A549 (cell line): ENCODE measurements at regions of chr1 and their contacts with region 1.

Region 1: DNA sequence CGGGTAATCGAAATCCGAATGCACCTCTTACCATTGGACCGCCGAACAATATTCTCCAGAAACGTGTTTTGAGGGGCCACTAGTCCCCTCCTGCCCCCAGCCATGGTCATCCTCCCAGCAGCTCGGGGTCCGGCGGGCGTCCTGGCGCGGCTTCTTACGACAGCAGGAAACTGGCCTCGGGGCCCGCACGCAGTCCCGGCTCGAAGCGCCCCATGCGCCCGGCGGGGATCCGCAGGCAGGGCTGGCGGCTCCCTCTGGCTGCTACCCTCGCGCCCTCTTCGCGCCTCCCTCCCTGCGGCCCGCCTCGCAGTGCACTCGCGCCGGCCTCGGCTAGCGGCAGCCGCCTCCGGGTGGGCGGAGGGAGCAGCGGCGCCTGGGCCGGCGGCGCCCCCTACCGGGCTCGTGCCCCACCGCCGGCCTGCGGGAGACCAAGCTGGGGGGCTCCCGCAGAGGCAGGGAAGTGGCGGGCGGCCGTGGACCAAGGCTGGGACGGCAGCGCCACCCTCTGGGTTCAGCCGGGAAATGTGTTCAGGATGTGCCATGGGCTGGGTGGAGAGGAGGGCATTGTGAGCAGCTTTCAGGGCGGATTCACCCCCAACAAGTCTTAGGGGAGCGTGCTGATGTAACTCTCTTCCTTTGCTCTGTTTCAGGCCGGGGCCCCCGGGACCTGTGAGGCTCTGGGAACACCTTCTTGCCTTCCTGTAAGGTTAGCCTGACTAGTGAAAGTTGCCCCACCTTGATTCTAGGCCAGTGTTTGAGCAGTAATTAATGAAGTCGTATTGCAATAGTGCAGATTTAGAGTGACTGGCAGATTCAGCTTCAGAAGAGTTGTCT is at the start of gene KCNH1:
- DNase-seq: peak; percentile 78 to 86
- ATAC-seq: peak; percentile 95
- H3K4me3 ChIP-seq: peak within 1 kb of the TSS; percentile 67
- H3K27ac ChIP-seq: peak within 1 kb of the TSS; percentile 89 to 93
- H3K4me1 ChIP-seq: peaks cover 20% of the 10 kb centered on the region
- CTCF ChIP-seq: peak; percentile 100
- EP300 ChIP-seq: peak in 1 of 2 experiments; percentile 32; a peak in 1 of 5 replicates
- POLR2A ChIP-seq: no peak
- RAD21 ChIP-seq: peak; percentile 96 to 100
- polyA plus RNA-seq, gene KCNH1: 7.9 and 8.4 TPM in 2 replicates

Region 2: GRCh38 chr1:210384630-210385029 is 749.4 kb before region 1 on chr1:
- CTCF ChIA-PET with region 1: interaction called, 21 read pairs
- POLR2A ChIA-PET with region 1: no interaction called
- DNase-seq: no peak
- ATAC-seq: no peak
- H3K4me3 ChIP-seq: no peak overlapping the region
- H3K27ac ChIP-seq: 0 out of 6 replicates have a peak overlapping the region, but pooled peaks of 1 of the 2 experiments have one; percentile 5
- H3K4me1 ChIP-seq: peaks cover 13% of the 10 kb centered on the region; the same call in 2 of the 3 replicates
- CTCF ChIP-seq: no peak
- EP300 ChIP-seq: no peak
- POLR2A ChIP-seq: no peak
- RAD21 ChIP-seq: no peak

Region 3: DNA sequence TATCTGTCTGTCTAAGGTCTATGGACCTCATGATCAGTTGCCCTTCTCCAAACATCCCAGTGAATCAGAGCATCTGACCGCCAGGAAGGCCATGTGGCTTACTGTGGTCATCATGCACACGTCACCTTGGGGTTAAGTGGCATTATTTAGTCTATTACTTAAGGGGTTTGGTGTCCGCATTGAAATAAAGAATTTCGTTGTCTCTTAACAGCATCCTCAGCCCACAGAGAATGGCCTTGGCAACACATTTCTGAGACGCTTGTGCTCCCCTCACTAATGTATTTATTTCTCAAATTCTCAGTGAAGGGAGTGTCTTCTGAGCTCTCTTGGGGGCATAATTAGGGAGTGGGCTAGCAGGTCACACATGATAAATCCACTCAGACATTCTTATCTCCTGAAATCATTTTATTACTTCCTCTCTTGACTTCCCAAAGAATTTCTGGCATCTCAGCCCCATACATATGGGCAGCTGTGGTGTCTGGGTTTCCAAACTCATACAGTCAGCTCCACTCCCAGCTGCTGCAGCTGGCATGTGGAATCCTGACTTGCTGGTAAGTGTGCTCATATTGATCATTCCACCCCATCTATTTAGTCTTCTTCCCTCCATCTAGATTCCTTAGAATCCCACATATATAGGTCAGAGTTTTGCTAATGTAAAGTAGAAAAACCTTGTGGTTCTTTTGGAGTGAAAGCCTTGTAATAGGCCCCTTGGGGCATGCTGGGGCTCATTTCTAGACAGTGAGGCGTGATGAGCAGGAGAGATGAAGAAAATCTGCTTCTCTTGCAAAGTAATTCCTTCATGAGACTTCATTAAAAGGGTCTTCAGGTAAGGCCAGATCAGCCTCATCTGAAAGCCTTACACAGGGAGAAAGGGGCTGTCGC is 694.9 kb before region 1 on chr1:
- CTCF ChIA-PET with region 1: interaction called, 43 read pairs
- POLR2A ChIA-PET with region 1: no interaction called
- DNase-seq: peak in 1 of 2 experiments; percentile 82
- ATAC-seq: peak; percentile 93 to 95
- H3K4me3 ChIP-seq: no peak overlapping the region
- H3K27ac ChIP-seq: peak overlapping the region; percentile 72 to 85
- H3K4me1 ChIP-seq: peaks cover 36% of the 10 kb centered on the region
- CTCF ChIP-seq: no peak
- EP300 ChIP-seq: peak; percentile 84 to 95; a peak in 3 of 5 replicates
- POLR2A ChIP-seq: no peak
- RAD21 ChIP-seq: peak in 1 of 2 experiments; percentile 16; a peak in 2 of 5 replicates

Region 4: DNA sequence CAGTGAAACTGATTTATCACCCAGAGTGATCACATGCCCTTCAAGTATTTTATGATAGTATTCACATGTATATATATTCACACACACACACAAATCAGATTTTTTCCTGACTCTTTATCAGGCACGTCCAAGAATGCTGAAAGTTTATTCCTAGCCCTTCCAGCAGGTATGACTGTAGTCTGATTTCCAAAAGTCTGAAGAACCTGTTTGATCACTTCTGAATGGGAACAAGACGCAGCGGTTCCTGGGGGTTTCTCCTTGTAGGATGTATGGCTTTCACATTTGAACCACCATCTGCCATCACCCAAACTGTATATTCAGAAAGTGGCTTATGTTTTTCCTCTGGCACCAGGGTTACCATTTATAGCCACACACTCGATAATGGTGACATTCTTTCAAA is 671.6 kb before region 1 on chr1:
- CTCF ChIA-PET with region 1: interaction called, 17 read pairs
- POLR2A ChIA-PET with region 1: no interaction called
- DNase-seq: no peak
- ATAC-seq: no peak
- H3K4me3 ChIP-seq: no peak overlapping the region
- H3K27ac ChIP-seq: no peak overlapping the region
- H3K4me1 ChIP-seq: no peaks in the 10 kb centered on the region
- CTCF ChIP-seq: no peak
- EP300 ChIP-seq: no peak
- POLR2A ChIP-seq: no peak
- RAD21 ChIP-seq: no peak

Region 5: GRCh38 chr1:210597555-210598134 is 536.4 kb before region 1 on chr1:
- CTCF ChIA-PET with region 1: interaction called, 279 read pairs
- POLR2A ChIA-PET with region 1: no interaction called
- DNase-seq: peak; percentile 68 to 97
- ATAC-seq: peak; percentile 97 to 98
- H3K4me3 ChIP-seq: no peak overlapping the region
- H3K27ac ChIP-seq: peak overlapping the region; percentile 100
- H3K4me1 ChIP-seq: peaks cover 40% of the 10 kb centered on the region
- CTCF ChIP-seq: no peak
- EP300 ChIP-seq: no peak
- POLR2A ChIP-seq: no peak
- RAD21 ChIP-seq: 0 out of 5 replicates have a peak, but pooled peaks of 1 of the 2 experiments have one; percentile 9

Region 6: DNA sequence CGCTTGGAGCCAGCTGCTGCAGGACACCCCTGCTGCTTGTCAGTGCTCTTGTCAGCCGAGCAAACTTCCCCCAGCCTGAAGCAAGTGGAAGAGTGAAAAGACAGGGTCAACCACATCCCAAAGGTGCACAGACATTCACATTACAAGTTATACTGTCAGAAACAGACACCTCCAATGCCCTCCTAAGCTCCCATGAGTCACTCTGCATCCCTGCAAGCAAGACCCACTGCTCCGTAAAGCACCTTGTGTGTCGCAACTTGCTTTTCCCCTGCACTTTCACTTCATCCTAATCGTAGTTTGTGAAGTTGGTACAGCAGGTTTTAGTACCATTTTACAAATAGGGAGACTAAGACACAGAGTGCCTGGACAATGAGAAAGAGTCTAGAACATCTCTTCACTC is 51.2 kb before region 1 on chr1:
- CTCF ChIA-PET with region 1: interaction called, 13 read pairs
- POLR2A ChIA-PET with region 1: no interaction called
- DNase-seq: no peak
- ATAC-seq: peak; percentile 30 to 73; a peak in 3 of 6 replicates
- H3K4me3 ChIP-seq: no peak overlapping the region
- H3K27ac ChIP-seq: no peak overlapping the region
- H3K4me1 ChIP-seq: no peaks in the 10 kb centered on the region
- CTCF ChIP-seq: no peak
- EP300 ChIP-seq: no peak
- POLR2A ChIP-seq: no peak
- RAD21 ChIP-seq: no peak

Region 7: GRCh38 chr1:211198111-211198510 is 64.1 kb after region 1 on chr1:
- CTCF ChIA-PET with region 1: no interaction called
- POLR2A ChIA-PET with region 1: no interaction called
- DNase-seq: peak; percentile 18 to 41
- ATAC-seq: peak; percentile 89 to 93; a peak in 5 of 6 replicates
- H3K4me3 ChIP-seq: no peak overlapping the region
- H3K27ac ChIP-seq: peak overlapping the region in 1 of 2 experiments; percentile 55; a peak in 1 of 6 replicates
- H3K4me1 ChIP-seq: peaks cover 13% of the 10 kb centered on the region; the same call in 2 of the 3 replicates
- CTCF ChIP-seq: no peak
- EP300 ChIP-seq: no peak
- POLR2A ChIP-seq: no peak
- RAD21 ChIP-seq: no peak

Region 8: DNA sequence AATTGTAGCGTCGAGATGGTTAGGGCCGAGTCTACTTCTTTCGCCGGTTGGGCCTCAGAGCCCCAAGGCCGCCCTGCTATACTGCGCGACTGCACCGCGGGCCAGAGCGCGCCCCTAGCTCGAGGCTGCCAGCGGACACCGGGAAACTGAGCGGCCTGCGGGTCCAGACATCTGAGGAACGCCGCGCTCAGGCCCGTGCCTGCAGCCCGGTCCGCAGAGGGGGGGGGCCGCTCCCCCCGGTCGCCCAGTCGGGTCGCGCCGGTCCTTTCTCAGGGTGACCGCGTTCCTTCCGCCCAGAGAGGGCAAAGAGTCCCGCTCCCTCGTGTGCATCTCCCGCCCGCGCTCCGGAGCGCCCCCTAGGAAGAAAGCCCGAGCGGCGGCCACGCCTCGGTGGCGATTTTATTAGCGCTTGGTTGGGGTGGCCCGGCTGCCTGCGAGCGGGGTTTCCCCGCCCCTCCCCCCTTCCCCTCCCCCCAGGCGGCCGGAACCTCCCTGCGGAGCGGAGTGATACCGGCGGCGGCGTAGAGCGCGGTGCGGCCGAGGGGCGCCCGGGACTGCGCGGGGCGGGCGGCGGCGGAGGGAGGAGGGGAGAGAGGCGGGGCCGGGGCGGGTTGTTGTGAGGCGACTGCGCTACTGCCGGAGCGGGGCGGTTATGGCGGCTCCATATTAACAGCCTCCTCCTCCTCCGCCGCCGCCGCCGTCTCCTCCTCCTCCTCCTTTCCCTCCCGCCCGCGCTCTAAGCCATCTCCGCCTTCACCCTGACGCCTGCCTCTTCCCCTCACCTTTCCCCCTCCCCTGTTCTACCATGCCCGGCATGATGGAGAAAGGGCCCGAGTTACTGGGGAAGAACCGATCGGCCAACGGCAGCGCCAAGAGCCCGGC is 124.9 kb after region 1 on chr1 and contains the start of gene RCOR3:
- CTCF ChIA-PET with region 1: interaction called, 11 read pairs
- POLR2A ChIA-PET with region 1: interaction called, 3 read pairs
- DNase-seq: peak; percentile 68 to 96
- ATAC-seq: peak; percentile 79 to 88
- H3K4me3 ChIP-seq: peak within 1 kb of the TSS; percentile 90
- H3K27ac ChIP-seq: peak within 1 kb of the TSS; percentile 99
- H3K4me1 ChIP-seq: peaks cover 16% of the 10 kb centered on the region; the same call in 2 of the 3 replicates
- CTCF ChIP-seq: peak; percentile 89
- EP300 ChIP-seq: peak in 1 of 2 experiments; percentile 20; a peak in 1 of 5 replicates
- POLR2A ChIP-seq: peak; percentile 76
- RAD21 ChIP-seq: peak; percentile 6 to 60; a peak in 3 of 5 replicates
- polyA plus RNA-seq, gene RCOR3: 33.7 and 40.7 TPM in 2 replicates